ENCODE measurements at regions of chr6 and their contacts with region 1.

Region 1: GRCh38 chr6:28683944-28684538 is 158.4 kb downstream of the GPX5 start:
- DNase-seq: peak; percentile 60
- ATAC-seq: peak; percentile 91
- H3K4me3 ChIP-seq: no peak overlapping the region
- H3K27ac ChIP-seq: no peak overlapping the region
- H3K4me1 ChIP-seq: peaks cover 3 to 13% of the 10 kb centered on the region in 2 experiments; a peak in 3 of 4 replicates
- H3K27me3 ChIP-seq: no peaks in the 10 kb centered on the region
- CTCF ChIP-seq: peak; percentile 57 to 83 (median 71)
- POLR2A ChIP-seq: no peak
- RAD21 ChIP-seq: peak; percentile 97

Region 2: DNA sequence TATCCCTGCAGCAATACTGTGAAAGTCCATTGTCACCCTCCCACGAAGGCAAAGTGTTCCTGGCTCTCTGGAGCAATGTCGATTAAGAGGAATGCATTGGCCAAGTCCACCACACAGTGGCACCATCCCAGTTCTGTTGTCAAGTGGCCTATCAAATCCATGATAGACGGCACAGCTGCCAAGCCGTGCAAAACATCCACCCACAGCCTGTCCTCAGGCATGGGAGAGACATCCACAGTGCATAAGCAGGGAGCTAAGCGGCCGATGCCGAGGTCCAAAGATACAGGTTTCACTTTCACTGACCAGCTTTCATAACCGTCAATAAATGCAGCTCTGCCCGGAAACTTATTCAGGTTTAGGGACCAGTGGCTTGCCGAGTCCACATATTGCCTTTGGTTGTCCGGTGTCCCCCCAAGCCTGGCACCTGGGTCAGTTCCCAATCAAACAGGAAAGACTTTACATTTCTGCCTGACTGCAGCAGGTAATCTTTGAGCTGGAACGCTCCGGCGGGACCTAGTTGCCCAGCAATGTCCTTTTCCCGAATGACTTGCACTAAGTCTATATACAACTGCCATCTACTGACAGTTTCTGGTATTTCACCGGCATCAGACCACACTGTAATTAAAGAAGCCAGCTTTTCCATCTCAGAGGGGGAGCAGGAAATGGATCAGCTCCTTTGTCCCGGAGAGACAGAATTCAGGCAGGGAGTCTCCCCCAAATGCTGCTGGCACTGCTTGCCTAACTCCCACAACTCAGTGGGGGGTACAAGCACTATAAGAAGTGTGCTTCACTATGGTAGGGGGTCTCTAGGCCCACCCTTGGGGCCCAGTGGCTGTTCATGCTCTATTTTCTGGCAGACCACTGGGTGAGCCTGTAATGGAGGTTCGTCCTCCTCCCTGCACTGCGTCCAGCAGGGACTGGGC is 328.0 kb before region 1 on chr6:
- CTCF ChIA-PET with region 1: no interaction called
- POLR2A ChIA-PET with region 1: no interaction called
- RAD21 ChIA-PET with region 1: no interaction called
- intact Hi-C with region 1: loop called (anchors 10 kb)
- DNase-seq: peak; percentile 72
- ATAC-seq: peak; percentile 72
- H3K4me3 ChIP-seq: peak overlapping the region; percentile 46 to 63
- H3K27ac ChIP-seq: peak overlapping the region; percentile 85
- H3K4me1 ChIP-seq: peaks cover 39 to 56% of the 10 kb centered on the region in 2 experiments
- H3K27me3 ChIP-seq: no peaks in the 10 kb centered on the region
- CTCF ChIP-seq: peak; percentile 60 to 69 (median 62)
- POLR2A ChIP-seq: no peak
- RAD21 ChIP-seq: peak; percentile 84

Region 3: GRCh38 chr6:28496099-28496779 is 187.8 kb before region 1 on chr6:
- CTCF ChIA-PET with region 1: interaction called, 11 read pairs
- POLR2A ChIA-PET with region 1: no interaction called
- RAD21 ChIA-PET with region 1: no interaction called
- intact Hi-C with region 1: loop called (anchors 1 kb)
- DNase-seq: peak; percentile 8
- ATAC-seq: peak; percentile 70
- H3K4me3 ChIP-seq: no peak overlapping the region
- H3K27ac ChIP-seq: no peak overlapping the region
- H3K4me1 ChIP-seq: no peaks in the 10 kb centered on the region; a peak in 1 of 4 replicates
- H3K27me3 ChIP-seq: no peaks in the 10 kb centered on the region
- CTCF ChIP-seq: peak; percentile 6 to 67 (median 39); a peak in 4 of 6 replicates
- POLR2A ChIP-seq: no peak
- RAD21 ChIP-seq: peak; percentile 85

Region 4: GRCh38 chr6:28838634-28839442 is 154.8 kb after region 1 on chr6:
- CTCF ChIA-PET with region 1: interaction called, 4 read pairs
- POLR2A ChIA-PET with region 1: no interaction called
- RAD21 ChIA-PET with region 1: no interaction called
- intact Hi-C with region 1: loop called (anchors 1 kb)
- DNase-seq: peak; percentile 75
- ATAC-seq: peak; percentile 84
- H3K4me3 ChIP-seq: peak overlapping the region; percentile 55 to 67
- H3K27ac ChIP-seq: peak overlapping the region; percentile 67
- H3K4me1 ChIP-seq: peaks cover 3 to 19% of the 10 kb centered on the region in 2 experiments; a peak in 3 of 4 replicates
- H3K27me3 ChIP-seq: no peaks in the 10 kb centered on the region
- CTCF ChIP-seq: peak; percentile 46 to 67 (median 65); a peak in 5 of 6 replicates
- POLR2A ChIP-seq: peak; percentile 45
- RAD21 ChIP-seq: peak; percentile 55

Region 5: GRCh38 chr6:28981833-28982475 is 297.9 kb after region 1 on chr6:
- CTCF ChIA-PET with region 1: interaction called, 3 read pairs
- POLR2A ChIA-PET with region 1: no interaction called
- RAD21 ChIA-PET with region 1: no interaction called
- intact Hi-C with region 1: loop called (anchors 2 kb)
- DNase-seq: peak; percentile 91
- ATAC-seq: peak; percentile 35
- H3K4me3 ChIP-seq: peak overlapping the region; percentile 31 to 56
- H3K27ac ChIP-seq: peak overlapping the region; percentile 24; the same call in 1 of the 2 replicates
- H3K4me1 ChIP-seq: peaks cover 35 to 71% of the 10 kb centered on the region in 2 experiments
- H3K27me3 ChIP-seq: no peaks in the 10 kb centered on the region
- CTCF ChIP-seq: no peak
- POLR2A ChIP-seq: no peak
- RAD21 ChIP-seq: peak; percentile 45; the same call in 1 of the 2 replicates

Region 6: DNA sequence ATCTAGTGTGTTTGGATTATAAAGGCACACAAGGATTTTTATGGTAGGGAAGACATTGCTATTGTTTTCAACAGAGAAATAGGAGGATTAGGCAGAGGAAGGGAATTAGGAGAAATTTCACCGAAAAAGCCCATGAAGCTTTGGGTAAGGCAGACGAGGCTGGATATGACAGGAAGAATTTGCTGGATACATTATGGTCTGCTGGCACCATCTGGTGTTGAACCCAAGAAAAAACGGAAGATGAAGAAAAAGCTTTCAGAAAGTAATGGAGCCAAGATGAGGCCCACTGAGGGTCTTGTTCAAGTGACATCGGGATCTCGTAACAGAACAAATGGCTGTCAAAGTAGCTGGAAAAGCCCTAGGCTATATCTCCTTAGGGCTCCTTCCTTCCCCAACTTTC is 543.2 kb after region 1 on chr6:
- CTCF ChIA-PET with region 1: interaction called, 5 read pairs
- POLR2A ChIA-PET with region 1: no interaction called
- RAD21 ChIA-PET with region 1: no interaction called
- intact Hi-C with region 1: loop called (anchors 2 kb)
- DNase-seq: no peak
- ATAC-seq: no peak
- H3K4me3 ChIP-seq: no peak overlapping the region
- H3K27ac ChIP-seq: no peak overlapping the region
- H3K4me1 ChIP-seq: no peaks in the 10 kb centered on the region
- H3K27me3 ChIP-seq: peaks cover 7% of the 10 kb centered on the region; the same call in 1 of the 2 replicates
- CTCF ChIP-seq: peak in 2 of 3 experiments; percentile 29 to 30; a peak in 3 of 6 replicates
- POLR2A ChIP-seq: no peak
- RAD21 ChIP-seq: peak; percentile 63

Region 7: DNA sequence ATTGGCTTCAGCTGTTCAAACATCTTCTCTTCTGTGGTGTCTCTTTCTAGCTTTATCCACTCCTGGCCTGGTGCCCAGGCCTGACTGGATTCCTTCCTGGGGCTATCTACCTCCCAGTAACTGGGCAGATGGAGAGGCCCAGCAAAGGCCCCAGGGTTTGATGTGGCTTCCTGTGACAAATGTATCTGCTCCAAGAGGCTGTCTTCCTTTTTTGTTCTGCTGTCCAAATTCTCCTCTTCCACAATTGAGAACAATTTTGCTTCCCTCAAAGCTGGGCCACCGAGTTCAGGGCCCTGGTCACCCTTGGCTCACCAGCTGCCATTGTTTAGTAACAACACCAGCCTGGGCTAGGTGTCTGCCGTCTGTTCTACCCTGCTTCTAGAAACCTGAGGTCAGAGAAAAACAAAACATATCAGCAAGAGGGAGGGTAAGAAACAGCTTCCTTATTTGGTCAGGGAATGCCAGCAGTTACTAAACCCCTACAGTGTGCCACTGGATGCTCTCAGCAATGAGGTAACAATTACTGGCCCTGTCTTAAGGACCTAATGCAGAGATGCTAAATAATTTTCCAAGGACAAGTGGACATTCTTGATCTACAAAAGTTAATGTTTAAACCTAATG is 993.0 kb after region 1 on chr6:
- CTCF ChIA-PET with region 1: no interaction called
- POLR2A ChIA-PET with region 1: no interaction called
- RAD21 ChIA-PET with region 1: no interaction called
- intact Hi-C with region 1: no loop called
- DNase-seq: no peak
- ATAC-seq: no peak
- H3K4me3 ChIP-seq: no peak overlapping the region
- H3K27ac ChIP-seq: no peak overlapping the region
- H3K4me1 ChIP-seq: peaks cover 0 to 7% of the 10 kb centered on the region in 2 experiments; a peak in 1 of 4 replicates
- H3K27me3 ChIP-seq: no peaks in the 10 kb centered on the region
- CTCF ChIP-seq: no peak
- POLR2A ChIP-seq: no peak
- RAD21 ChIP-seq: no peak

Measured in HCT116 (cell line).